CD8-positive, alpha-beta T cell (primary cell): ENCODE measurements at regions of chr15 and their contacts with region 1.

Region 1: GRCh38 chr15:64731012-64731806 is 44.2 kb downstream of the RBPMS2 start:
- DNase-seq: peak; percentile 68 to 93 (median 86)
- ATAC-seq: peak; percentile 77
- H3K4me3 ChIP-seq: no peak overlapping the region
- H3K4me3 Mint-ChIP-seq: no peak overlapping the region
- H3K27ac ChIP-seq: no peak overlapping the region
- H3K27ac Mint-ChIP-seq: no peak overlapping the region
- H3K4me1 ChIP-seq: no peaks in the 10 kb centered on the region
- H3K4me1 Mint-ChIP-seq: peaks cover 5% of the 10 kb centered on the region
- H3K27me3 ChIP-seq: no peaks in the 10 kb centered on the region
- H3K27me3 Mint-ChIP-seq: no peaks in the 10 kb centered on the region
- CTCF ChIP-seq: peak; percentile 98

Region 2: GRCh38 chr15:64430000-64430735 is 301.0 kb before region 1 on chr15:
- CTCF ChIA-PET with region 1: interaction called, 19 read pairs
- POLR2A ChIA-PET with region 1: no interaction called
- intact Hi-C with region 1: loop called (anchors 1 kb)
- DNase-seq: peak; percentile 1 to 88 (median 43)
- ATAC-seq: peak; percentile 89
- H3K4me3 ChIP-seq: no peak overlapping the region
- H3K4me3 Mint-ChIP-seq: peak overlapping the region; percentile 57
- H3K27ac ChIP-seq: peak overlapping the region; percentile 49 to 65
- H3K27ac Mint-ChIP-seq: peak overlapping the region; percentile 92
- H3K4me1 ChIP-seq: peaks cover 52% of the 10 kb centered on the region
- H3K4me1 Mint-ChIP-seq: peaks cover 44% of the 10 kb centered on the region
- H3K27me3 ChIP-seq: no peaks in the 10 kb centered on the region
- H3K27me3 Mint-ChIP-seq: no peaks in the 10 kb centered on the region
- CTCF ChIP-seq: no peak

Region 3: GRCh38 chr15:64619880-64620839 is 111.0 kb before region 1 on chr15:
- CTCF ChIA-PET with region 1: no interaction called
- POLR2A ChIA-PET with region 1: no interaction called
- intact Hi-C with region 1: no loop called
- DNase-seq: no peak
- ATAC-seq: no peak
- H3K4me3 ChIP-seq: no peak overlapping the region
- H3K4me3 Mint-ChIP-seq: peak overlapping the region; percentile 53
- H3K27ac ChIP-seq: no peak overlapping the region
- H3K27ac Mint-ChIP-seq: peak overlapping the region; percentile 91
- H3K4me1 ChIP-seq: peaks cover 89% of the 10 kb centered on the region
- H3K4me1 Mint-ChIP-seq: peaks cover 88% of the 10 kb centered on the region
- H3K27me3 ChIP-seq: no peaks in the 10 kb centered on the region
- H3K27me3 Mint-ChIP-seq: no peaks in the 10 kb centered on the region
- CTCF ChIP-seq: no peak

Region 4: GRCh38 chr15:64702816-64703646 is 28.2 kb before region 1 on chr15:
- CTCF ChIA-PET with region 1: interaction called, 33 read pairs
- POLR2A ChIA-PET with region 1: no interaction called
- intact Hi-C with region 1: no loop called
- DNase-seq: peak; percentile 90 to 97 (median 95)
- ATAC-seq: peak; percentile 95
- H3K4me3 ChIP-seq: peak overlapping the region; percentile 79 to 86
- H3K4me3 Mint-ChIP-seq: peak overlapping the region; percentile 91
- H3K27ac ChIP-seq: peak overlapping the region; percentile 60 to 66
- H3K27ac Mint-ChIP-seq: peak overlapping the region; percentile 92
- H3K4me1 ChIP-seq: peaks cover 47% of the 10 kb centered on the region
- H3K4me1 Mint-ChIP-seq: peaks cover 51% of the 10 kb centered on the region
- H3K27me3 ChIP-seq: no peaks in the 10 kb centered on the region
- H3K27me3 Mint-ChIP-seq: no peaks in the 10 kb centered on the region
- CTCF ChIP-seq: no peak

Region 5: DNA sequence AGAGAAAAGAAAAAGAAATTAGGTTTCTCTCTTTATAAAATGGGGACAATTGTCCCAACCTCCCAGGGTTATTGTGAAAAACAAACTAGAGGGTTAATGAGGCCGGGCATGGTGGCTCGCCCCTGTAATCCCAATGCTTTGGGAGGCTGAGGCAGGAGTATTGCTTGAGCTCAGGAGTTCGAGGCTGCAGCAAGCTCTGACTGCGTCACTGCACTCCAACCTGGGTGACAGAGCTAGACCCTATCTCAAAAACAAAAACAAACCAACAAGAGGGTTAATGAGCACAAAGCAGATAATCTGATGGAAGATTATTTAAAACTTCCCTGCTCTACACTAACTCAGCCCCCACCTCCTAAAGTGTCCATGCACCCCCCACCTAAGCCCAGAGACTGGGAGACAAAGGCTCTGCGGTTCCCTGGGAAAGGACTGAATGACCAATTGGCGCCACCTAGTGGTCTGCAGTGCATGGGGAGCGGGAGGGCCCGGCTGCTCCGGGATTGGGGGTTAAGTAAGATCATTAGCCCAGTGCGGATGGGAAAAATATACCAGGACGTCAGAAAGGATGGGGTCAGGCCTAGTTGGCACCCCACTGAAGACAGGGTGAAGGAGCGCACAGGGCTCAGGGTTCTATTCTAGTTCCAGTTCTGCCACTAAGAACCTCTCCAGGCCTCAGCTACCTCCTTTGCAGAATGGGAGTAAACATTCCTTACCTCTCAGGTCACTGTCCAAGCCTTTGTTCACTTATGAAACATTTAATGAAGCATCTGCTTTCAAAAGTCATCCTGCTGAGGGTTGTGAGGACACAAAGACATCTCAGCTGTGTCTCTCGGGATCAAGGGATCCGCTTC is 78.7 kb after region 1 on chr15:
- CTCF ChIA-PET with region 1: interaction called, 26 read pairs
- POLR2A ChIA-PET with region 1: no interaction called
- intact Hi-C with region 1: loop called (anchors 1 kb)
- DNase-seq: peak; percentile 27 to 78 (median 67)
- ATAC-seq: peak; percentile 71
- H3K4me3 ChIP-seq: no peak overlapping the region
- H3K4me3 Mint-ChIP-seq: no peak overlapping the region
- H3K27ac ChIP-seq: no peak overlapping the region
- H3K27ac Mint-ChIP-seq: no peak overlapping the region
- H3K4me1 ChIP-seq: no peaks in the 10 kb centered on the region
- H3K4me1 Mint-ChIP-seq: peaks cover 2% of the 10 kb centered on the region
- H3K27me3 ChIP-seq: no peaks in the 10 kb centered on the region
- H3K27me3 Mint-ChIP-seq: peaks cover 2% of the 10 kb centered on the region
- CTCF ChIP-seq: peak; percentile 88

Region 6: DNA sequence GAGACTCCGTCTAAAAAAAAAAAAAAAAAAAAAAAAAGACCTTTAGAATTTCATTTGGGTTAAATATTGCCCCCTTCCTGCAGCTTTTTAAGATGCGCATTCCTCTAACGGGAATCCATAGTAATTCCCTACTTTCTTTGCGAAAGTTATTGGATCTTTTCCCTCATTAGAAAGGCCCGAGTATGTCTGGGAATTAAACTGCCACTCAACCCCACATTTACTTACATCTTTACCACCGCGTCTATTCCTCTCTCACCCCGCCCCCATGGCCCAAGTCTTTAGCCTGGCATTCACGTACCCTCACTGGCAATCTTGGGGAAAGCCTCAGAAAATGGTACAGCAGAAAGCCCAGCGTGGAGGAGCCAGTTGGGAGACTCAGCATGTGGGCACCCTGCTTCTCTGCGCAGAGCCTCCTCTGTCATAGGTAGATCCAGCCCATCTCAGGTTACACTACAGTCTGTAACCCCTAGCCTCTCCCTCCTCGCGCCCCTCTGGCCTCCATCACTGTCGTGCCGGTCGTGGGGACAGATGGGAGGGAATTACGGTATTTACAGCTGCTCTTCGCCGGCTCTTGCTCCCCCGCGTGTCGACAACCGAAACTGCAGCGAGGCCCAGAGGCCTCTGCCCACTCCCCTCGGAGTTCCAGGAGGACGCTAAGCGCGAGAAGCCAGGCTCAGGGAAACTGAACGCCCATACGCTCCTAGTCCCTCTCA is 174.1 kb after region 1 on chr15:
- CTCF ChIA-PET with region 1: interaction called, 154 read pairs
- POLR2A ChIA-PET with region 1: interaction called, 6 read pairs
- intact Hi-C with region 1: loop called in 1 of 2 experiments (anchors 1 kb)
- DNase-seq: peak; percentile 60 to 86 (median 79)
- ATAC-seq: peak; percentile 81
- H3K4me3 ChIP-seq: peak overlapping the region; percentile 11 to 21
- H3K4me3 Mint-ChIP-seq: peak overlapping the region; percentile 69
- H3K27ac ChIP-seq: no peak overlapping the region
- H3K27ac Mint-ChIP-seq: no peak overlapping the region
- H3K4me1 ChIP-seq: peaks cover 25% of the 10 kb centered on the region
- H3K4me1 Mint-ChIP-seq: peaks cover 37% of the 10 kb centered on the region
- H3K27me3 ChIP-seq: no peaks in the 10 kb centered on the region
- H3K27me3 Mint-ChIP-seq: peaks cover 4% of the 10 kb centered on the region
- CTCF ChIP-seq: peak; percentile 87

Region 7: GRCh38 chr15:65054333-65055200 is 323.4 kb after region 1 on chr15:
- CTCF ChIA-PET with region 1: no interaction called
- POLR2A ChIA-PET with region 1: no interaction called
- intact Hi-C with region 1: no loop called
- DNase-seq: peak in 8 of 9 experiments; percentile 21 to 66 (median 54)
- ATAC-seq: peak; percentile 54
- H3K4me3 ChIP-seq: no peak overlapping the region
- H3K4me3 Mint-ChIP-seq: no peak overlapping the region
- H3K27ac ChIP-seq: no peak overlapping the region
- H3K27ac Mint-ChIP-seq: no peak overlapping the region
- H3K4me1 ChIP-seq: peaks cover 7% of the 10 kb centered on the region
- H3K4me1 Mint-ChIP-seq: peaks cover 8% of the 10 kb centered on the region
- H3K27me3 ChIP-seq: no peaks in the 10 kb centered on the region
- H3K27me3 Mint-ChIP-seq: no peaks in the 10 kb centered on the region
- CTCF ChIP-seq: peak; percentile 69

Region 8: GRCh38 chr15:65298731-65299130 is 567.5 kb after region 1 on chr15:
- CTCF ChIA-PET with region 1: no interaction called
- POLR2A ChIA-PET with region 1: no interaction called
- intact Hi-C with region 1: loop called in 1 of 2 experiments (anchors 5 kb)
- DNase-seq: no peak
- ATAC-seq: no peak
- H3K4me3 ChIP-seq: peak overlapping the region in 1 of 2 experiments; percentile 6
- H3K4me3 Mint-ChIP-seq: peak overlapping the region; percentile 88
- H3K27ac ChIP-seq: peak overlapping the region in 1 of 2 experiments; percentile 41
- H3K27ac Mint-ChIP-seq: peak overlapping the region; percentile 84
- H3K4me1 ChIP-seq: peaks cover 36% of the 10 kb centered on the region
- H3K4me1 Mint-ChIP-seq: peaks cover 45% of the 10 kb centered on the region
- H3K27me3 ChIP-seq: no peaks in the 10 kb centered on the region
- H3K27me3 Mint-ChIP-seq: no peaks in the 10 kb centered on the region
- CTCF ChIP-seq: no peak